ENCODE measurements at regions of chr18 and their contacts with region 1.

Region 1: DNA sequence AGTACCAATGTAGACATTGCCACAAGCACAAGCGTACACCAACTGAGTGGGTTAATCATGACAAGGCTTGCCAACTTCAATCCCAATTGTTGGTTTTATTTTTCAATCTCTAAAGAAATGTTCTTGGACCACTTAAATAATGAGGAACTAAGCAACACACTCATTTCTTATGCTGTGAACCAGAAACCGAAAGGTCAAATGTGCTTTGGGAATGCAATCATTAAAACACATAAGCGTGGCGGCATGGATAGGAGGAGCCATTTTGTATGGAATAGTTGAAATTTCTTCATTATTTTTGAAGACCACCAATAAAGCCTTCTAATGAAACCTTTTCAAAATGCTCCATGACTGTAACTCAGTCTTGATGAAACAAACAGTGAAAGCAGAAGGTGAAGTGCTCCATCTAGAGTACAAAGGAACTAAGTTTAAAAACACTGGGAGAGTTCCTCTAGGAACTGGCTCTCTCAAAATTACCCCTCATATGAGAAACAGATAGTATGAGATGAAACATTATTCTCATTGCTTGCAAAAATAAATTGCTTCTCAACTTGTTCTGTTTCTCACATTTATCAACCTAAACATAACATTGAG is 113.2 kb upstream of the CHST9 start:
- DNase-seq: no peak
- ATAC-seq: peak in 2 of 8 donors; percentile 57 to 67
- H3K4me3 ChIP-seq: no peak overlapping the region
- H3K27ac ChIP-seq: no peak overlapping the region
- H3K4me1 ChIP-seq: no peaks in the 10 kb centered on the region
- H3K27me3 ChIP-seq: no peaks in the 10 kb centered on the region
- CTCF ChIP-seq: peak; percentile 6 to 61 (median 42)

Region 2: DNA sequence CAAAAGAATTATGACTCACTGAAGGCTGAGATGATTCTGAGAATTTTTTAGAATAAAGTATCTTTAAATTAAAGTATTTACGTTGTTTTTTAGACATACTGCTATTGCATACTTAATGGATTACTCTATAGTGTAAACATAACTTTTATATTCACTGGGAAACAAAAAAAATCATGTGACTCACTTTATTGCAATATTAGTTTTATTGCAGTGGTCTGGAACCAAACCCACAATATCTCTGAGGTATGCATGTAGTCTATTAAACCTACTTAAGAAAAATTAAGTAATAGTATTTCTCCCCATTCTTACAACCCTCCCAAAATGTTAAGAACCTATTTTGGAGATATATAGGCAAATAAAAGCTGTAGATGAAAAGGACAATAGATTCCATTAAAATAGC is 1803.4 kb before region 1 on chr18:
- intact Hi-C with region 1: loop called in 1 of 10 experiments (anchors 5 kb)
- DNase-seq: no peak
- ATAC-seq: no peak
- H3K4me3 ChIP-seq: no peak overlapping the region
- H3K27ac ChIP-seq: no peak overlapping the region
- H3K4me1 ChIP-seq: no peaks in the 10 kb centered on the region
- H3K27me3 ChIP-seq: no peaks in the 10 kb centered on the region
- CTCF ChIP-seq: no peak

Region 3: GRCh38 chr18:26804519-26804918 is 493.8 kb before region 1 on chr18:
- intact Hi-C with region 1: loop called in 1 of 10 experiments (anchors 10 kb)
- DNase-seq: no peak
- ATAC-seq: peak in 3 of 8 donors; percentile 33 to 41 (median 37)
- H3K4me3 ChIP-seq: no peak overlapping the region
- H3K27ac ChIP-seq: no peak overlapping the region
- H3K4me1 ChIP-seq: no peaks in the 10 kb centered on the region
- H3K27me3 ChIP-seq: peaks cover 0 to 6% (median 0%) of the 10 kb centered on the region in 7 donors
- CTCF ChIP-seq: peak in 7 of 9 donors; percentile 39 to 59 (median 49)

Region 4: DNA sequence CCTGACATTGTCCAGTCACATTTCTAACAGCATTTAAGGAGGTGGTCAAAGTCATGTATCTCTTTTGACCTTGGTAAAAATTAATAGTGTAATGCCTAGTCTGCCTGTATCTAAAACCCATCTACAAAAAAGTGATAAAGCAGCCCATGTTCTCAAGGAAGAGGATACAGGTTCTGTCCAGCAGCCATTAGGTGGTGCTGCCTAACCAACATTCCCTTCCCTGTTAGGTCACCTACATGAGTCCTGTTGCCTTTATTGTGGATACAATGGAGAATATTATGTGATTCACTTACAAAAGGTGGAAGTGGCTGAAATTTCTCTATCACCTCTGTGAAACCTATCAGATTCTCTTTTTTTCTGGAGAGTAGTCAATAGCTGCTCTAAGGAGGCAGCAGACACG is 485.3 kb before region 1 on chr18:
- intact Hi-C with region 1: loop called in 2 of 10 experiments (anchors 10 kb)
- DNase-seq: peak in 1 of 2 donors; percentile 27
- ATAC-seq: peak in 3 of 8 donors; percentile 73 to 79 (median 78)
- H3K4me3 ChIP-seq: no peak overlapping the region
- H3K27ac ChIP-seq: no peak overlapping the region
- H3K4me1 ChIP-seq: no peaks in the 10 kb centered on the region
- H3K27me3 ChIP-seq: peaks cover 0 to 6% (median 0%) of the 10 kb centered on the region in 7 donors
- CTCF ChIP-seq: peak; percentile 21 to 76 (median 62)

Region 5: GRCh38 chr18:26832302-26832701 is 466.0 kb before region 1 on chr18:
- intact Hi-C with region 1: loop called in 1 of 10 experiments (anchors 5 kb)
- DNase-seq: no peak
- ATAC-seq: no peak
- H3K4me3 ChIP-seq: no peak overlapping the region
- H3K27ac ChIP-seq: no peak overlapping the region
- H3K4me1 ChIP-seq: no peaks in the 10 kb centered on the region
- H3K27me3 ChIP-seq: peaks cover 0 to 4% (median 0%) of the 10 kb centered on the region in 7 donors
- CTCF ChIP-seq: no peak

Region 6: DNA sequence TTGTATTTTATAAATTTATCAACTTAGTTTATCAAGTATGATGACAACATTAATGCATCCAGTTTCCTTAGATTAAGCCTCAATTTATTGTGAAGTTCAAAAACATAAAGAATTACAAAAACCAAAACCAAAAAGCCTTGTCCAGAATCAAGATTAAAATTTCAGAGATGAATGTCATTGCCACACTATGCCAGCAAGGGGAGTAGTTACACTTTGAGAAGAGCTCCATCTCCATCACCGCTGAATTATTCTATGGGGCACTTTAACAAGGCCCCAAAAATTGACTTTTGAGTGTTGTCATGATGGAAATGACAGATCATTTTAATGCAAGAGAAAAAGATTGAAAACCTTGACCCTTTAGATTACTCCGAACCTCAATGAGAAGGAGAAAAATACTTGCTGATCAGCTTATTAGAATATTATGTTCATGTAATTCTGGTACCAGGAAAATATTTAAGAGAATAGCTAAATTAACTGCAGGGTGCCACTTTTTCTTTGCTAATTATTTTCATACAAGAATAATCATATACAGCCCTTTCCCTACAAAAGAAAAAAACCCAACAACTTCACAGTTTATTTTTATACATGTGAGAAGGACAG is 280.3 kb before region 1 on chr18:
- intact Hi-C with region 1: loop called (anchors 1 to 5 kb)
- DNase-seq: no peak
- ATAC-seq: peak in 2 of 8 donors; percentile 33 to 66
- H3K4me3 ChIP-seq: no peak overlapping the region
- H3K27ac ChIP-seq: no peak overlapping the region
- H3K4me1 ChIP-seq: no peaks in the 10 kb centered on the region
- H3K27me3 ChIP-seq: no peaks in the 10 kb centered on the region
- CTCF ChIP-seq: peak; percentile 13 to 70 (median 58)

Region 7: GRCh38 chr18:27240383-27240782 is 57.9 kb before region 1 on chr18:
- intact Hi-C with region 1: loop called in 1 of 10 experiments (anchors 10 kb)
- DNase-seq: no peak
- ATAC-seq: no peak
- H3K4me3 ChIP-seq: no peak overlapping the region
- H3K27ac ChIP-seq: no peak overlapping the region
- H3K4me1 ChIP-seq: no peaks in the 10 kb centered on the region
- H3K27me3 ChIP-seq: no peaks in the 10 kb centered on the region
- CTCF ChIP-seq: no peak

Measured in heart right ventricle (tissue), 16 donors.